ENCODE measurements at regions of chr16 and their contacts with region 1.

Region 1: DNA sequence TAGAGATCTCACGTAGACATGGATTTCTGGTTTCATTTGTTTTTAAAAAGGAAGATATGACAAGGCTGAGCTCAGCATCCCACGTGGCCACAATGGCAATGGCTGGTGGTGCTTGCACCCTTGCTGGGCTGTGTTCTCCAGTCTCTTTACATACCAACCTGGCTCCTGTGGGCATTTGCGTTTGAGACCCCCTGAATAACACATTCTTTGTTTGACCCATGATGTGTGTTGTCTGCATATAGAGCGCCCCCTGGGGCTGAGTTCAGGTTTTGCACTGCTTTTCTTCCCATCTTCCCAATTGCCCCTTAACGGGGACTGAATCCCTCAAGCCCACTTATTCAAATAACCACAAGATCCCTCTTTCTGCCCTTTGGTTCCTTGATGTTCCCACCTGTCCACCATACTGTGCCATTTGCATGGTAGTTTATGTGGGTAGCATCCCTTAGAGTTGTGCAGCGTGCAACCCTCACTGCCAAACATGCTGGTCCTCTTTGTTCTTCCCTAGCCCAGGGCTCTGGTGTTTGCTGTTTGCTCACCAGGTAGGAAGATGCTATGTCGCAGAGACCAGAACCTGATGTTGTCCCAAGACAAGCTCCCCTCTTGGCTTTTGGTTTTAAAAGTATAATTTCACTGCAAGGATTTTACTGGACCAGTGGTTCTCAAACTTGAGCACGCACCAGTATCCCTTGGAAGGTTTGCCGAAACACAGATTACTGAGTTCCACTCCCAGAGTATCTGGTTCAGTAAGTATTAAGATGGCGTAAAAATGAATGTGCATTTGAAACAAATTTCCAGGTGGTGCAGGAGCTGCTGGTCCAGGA is 38.5 kb upstream of the NKD1 start:
- DNase-seq: peak in 7 of 9 experiments; percentile 7 to 60 (median 42)
- ATAC-seq: no peak
- H3K4me3 ChIP-seq: no peak overlapping the region
- H3K4me3 Mint-ChIP-seq: no peak overlapping the region
- H3K27ac ChIP-seq: no peak overlapping the region
- H3K27ac Mint-ChIP-seq: no peak overlapping the region
- H3K4me1 ChIP-seq: no peaks in the 10 kb centered on the region
- H3K4me1 Mint-ChIP-seq: no peaks in the 10 kb centered on the region
- H3K27me3 ChIP-seq: no peaks in the 10 kb centered on the region
- H3K27me3 Mint-ChIP-seq: no peaks in the 10 kb centered on the region
- CTCF ChIP-seq: peak; percentile 69

Region 2: DNA sequence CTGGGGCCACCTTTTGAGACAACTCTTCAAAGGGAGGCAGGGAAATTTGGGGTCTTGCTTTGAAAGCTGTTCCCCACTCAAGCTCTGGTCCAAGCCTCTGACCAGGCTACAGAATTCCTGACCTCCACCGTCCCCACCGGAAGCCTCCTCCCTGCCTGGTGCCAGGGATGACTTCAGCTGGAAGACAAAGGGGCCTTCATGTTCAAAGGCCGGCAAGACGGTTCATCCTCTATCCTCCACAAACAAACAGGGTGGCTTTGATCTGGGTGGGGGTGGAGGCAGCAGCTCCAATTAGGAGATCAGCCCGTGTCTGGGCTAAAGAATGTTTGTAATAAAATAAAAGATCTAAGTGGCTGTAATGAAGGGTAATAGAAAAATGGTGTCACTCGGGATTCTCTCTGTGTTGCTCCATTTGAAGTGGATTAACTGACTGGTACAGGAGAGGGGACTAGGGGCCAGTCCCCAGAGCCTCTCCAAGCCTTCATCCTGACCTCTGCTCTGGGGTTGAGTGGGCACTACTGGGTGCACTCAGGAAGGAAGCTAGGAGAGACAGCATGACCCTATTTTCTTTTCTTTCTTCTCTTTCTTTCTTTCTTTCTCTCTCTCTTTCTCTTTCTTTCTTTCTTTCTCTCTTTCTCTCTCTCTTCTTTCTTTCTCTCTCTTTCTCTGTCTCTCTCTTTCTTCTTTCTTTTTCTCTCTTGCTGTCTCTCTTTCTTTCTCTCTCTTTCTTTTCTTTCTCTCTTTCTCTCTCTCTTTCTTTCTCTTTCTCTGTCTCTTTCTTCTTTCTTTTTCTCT is 10.9 kb after region 1 on chr16:
- CTCF ChIA-PET with region 1: interaction called, 13 read pairs
- POLR2A ChIA-PET with region 1: no interaction called
- intact Hi-C with region 1: no loop called
- DNase-seq: peak in 1 of 9 experiments; percentile 7
- ATAC-seq: no peak
- H3K4me3 ChIP-seq: no peak overlapping the region
- H3K4me3 Mint-ChIP-seq: no peak overlapping the region
- H3K27ac ChIP-seq: no peak overlapping the region
- H3K27ac Mint-ChIP-seq: no peak overlapping the region
- H3K4me1 ChIP-seq: no peaks in the 10 kb centered on the region
- H3K4me1 Mint-ChIP-seq: no peaks in the 10 kb centered on the region
- H3K27me3 ChIP-seq: peaks cover 0 to 3% of the 10 kb centered on the region in 2 experiments
- H3K27me3 Mint-ChIP-seq: peaks cover 5% of the 10 kb centered on the region
- CTCF ChIP-seq: no peak